PC-9 (cell line): ENCODE measurements at regions of chr19 and their contacts with region 1.

Region 1: GRCh38 chr19:46040952-46041500 is at the start of gene IGFL4:
- DNase-seq: peak; percentile 40 to 80
- H3K4me3 ChIP-seq: no peak within 1 kb of the TSS
- H3K27ac ChIP-seq: no peak within 1 kb of the TSS
- H3K4me1 ChIP-seq: peaks cover 27% of the 10 kb centered on the region
- H3K27me3 ChIP-seq: peaks cover 33% of the 10 kb centered on the region; the same call in 1 of the 2 replicates
- CTCF ChIP-seq: no peak
- total RNA-seq, gene IGFL4: not detected in 2 replicates

Region 2: GRCh38 chr19:45973578-45974338 is 67.3 kb before region 1 on chr19 and contains the start of gene NOVA2:
- CTCF ChIA-PET with region 1: no interaction called
- POLR2A ChIA-PET with region 1: no interaction called
- intact Hi-C with region 1: no loop called
- DNase-seq: peak; percentile 39 to 56
- H3K4me3 ChIP-seq: no peak within 1 kb of the TSS; the same call in 1 of the 2 replicates
- H3K27ac ChIP-seq: no peak within 1 kb of the TSS
- H3K4me1 ChIP-seq: no peaks in the 10 kb centered on the region
- H3K27me3 ChIP-seq: peaks cover 88% of the 10 kb centered on the region
- CTCF ChIP-seq: no peak
- total RNA-seq, gene NOVA2: not detected in 2 replicates

Region 3: GRCh38 chr19:46056536-46056935 is 15.5 kb after region 1 on chr19:
- CTCF ChIA-PET with region 1: interaction called, 3 read pairs
- POLR2A ChIA-PET with region 1: no interaction called
- intact Hi-C with region 1: loop called (anchors 2 kb)
- DNase-seq: no peak
- H3K4me3 ChIP-seq: no peak overlapping the region
- H3K27ac ChIP-seq: no peak overlapping the region
- H3K4me1 ChIP-seq: no peaks in the 10 kb centered on the region
- H3K27me3 ChIP-seq: peaks cover 9% of the 10 kb centered on the region; the same call in 1 of the 2 replicates
- CTCF ChIP-seq: no peak

Region 4: GRCh38 chr19:46068345-46069258 is 27.6 kb after region 1 on chr19:
- CTCF ChIA-PET with region 1: no interaction called
- POLR2A ChIA-PET with region 1: no interaction called
- intact Hi-C with region 1: loop called (anchors 2 kb)
- DNase-seq: peak; percentile 78 to 99
- H3K4me3 ChIP-seq: peak overlapping the region; percentile 4; the same call in 1 of the 2 replicates
- H3K27ac ChIP-seq: peak overlapping the region; percentile 89
- H3K4me1 ChIP-seq: peaks cover 85% of the 10 kb centered on the region
- H3K27me3 ChIP-seq: no peaks in the 10 kb centered on the region
- CTCF ChIP-seq: no peak; the same call in 1 of the 2 replicates

Region 5: GRCh38 chr19:46250076-46250735 is 209.2 kb after region 1 on chr19:
- CTCF ChIA-PET with region 1: interaction called, 13 read pairs
- POLR2A ChIA-PET with region 1: no interaction called
- intact Hi-C with region 1: no loop called
- DNase-seq: peak in 1 of 2 experiments; percentile 66
- H3K4me3 ChIP-seq: no peak overlapping the region
- H3K27ac ChIP-seq: peak overlapping the region; percentile 48; the same call in 1 of the 2 replicates
- H3K4me1 ChIP-seq: peaks cover 50% of the 10 kb centered on the region
- H3K27me3 ChIP-seq: no peaks in the 10 kb centered on the region
- CTCF ChIP-seq: no peak